MCF 10A (cell line): ENCODE measurements at regions of chr9 and their contacts with region 1.

Region 1: DNA sequence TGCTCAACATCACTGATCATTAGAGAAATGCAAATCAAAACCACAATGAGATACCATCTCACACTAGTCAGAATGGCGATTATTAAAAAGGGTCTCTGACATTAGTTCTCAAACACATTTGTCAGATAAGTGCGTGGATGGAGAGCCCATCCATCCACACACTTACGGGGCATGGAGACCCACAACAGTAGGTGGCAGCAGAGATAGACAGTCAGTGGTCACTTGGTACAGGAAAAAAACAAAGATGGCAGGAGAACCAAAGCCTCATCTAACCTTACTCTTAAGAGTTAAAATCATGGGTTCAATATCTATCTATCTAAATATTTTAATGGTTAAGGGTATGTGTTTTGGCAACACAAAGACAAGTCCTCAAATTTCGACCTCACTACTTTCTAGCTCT is 1378.7 kb upstream of the C9orf72 start:
- DNase-seq: peak; percentile 8
- H3K4me3 Mint-ChIP-seq: no peak overlapping the region
- H3K27ac Mint-ChIP-seq: no peak overlapping the region
- H3K4me1 Mint-ChIP-seq: no peaks in the 10 kb centered on the region
- H3K27me3 Mint-ChIP-seq: no peaks in the 10 kb centered on the region
- CTCF ChIP-seq: no peak

Region 2: GRCh38 chr9:28045051-28045450 is 906.9 kb before region 1 on chr9:
- CTCF ChIA-PET with region 1: no interaction called
- POLR2A ChIA-PET with region 1: no interaction called
- intact Hi-C with region 1: no loop called
- DNase-seq: no peak
- H3K4me3 Mint-ChIP-seq: no peak overlapping the region
- H3K27ac Mint-ChIP-seq: no peak overlapping the region
- H3K4me1 Mint-ChIP-seq: peaks cover 4% of the 10 kb centered on the region
- H3K27me3 Mint-ChIP-seq: peaks cover 49% of the 10 kb centered on the region
- CTCF ChIP-seq: no peak

Region 3: DNA sequence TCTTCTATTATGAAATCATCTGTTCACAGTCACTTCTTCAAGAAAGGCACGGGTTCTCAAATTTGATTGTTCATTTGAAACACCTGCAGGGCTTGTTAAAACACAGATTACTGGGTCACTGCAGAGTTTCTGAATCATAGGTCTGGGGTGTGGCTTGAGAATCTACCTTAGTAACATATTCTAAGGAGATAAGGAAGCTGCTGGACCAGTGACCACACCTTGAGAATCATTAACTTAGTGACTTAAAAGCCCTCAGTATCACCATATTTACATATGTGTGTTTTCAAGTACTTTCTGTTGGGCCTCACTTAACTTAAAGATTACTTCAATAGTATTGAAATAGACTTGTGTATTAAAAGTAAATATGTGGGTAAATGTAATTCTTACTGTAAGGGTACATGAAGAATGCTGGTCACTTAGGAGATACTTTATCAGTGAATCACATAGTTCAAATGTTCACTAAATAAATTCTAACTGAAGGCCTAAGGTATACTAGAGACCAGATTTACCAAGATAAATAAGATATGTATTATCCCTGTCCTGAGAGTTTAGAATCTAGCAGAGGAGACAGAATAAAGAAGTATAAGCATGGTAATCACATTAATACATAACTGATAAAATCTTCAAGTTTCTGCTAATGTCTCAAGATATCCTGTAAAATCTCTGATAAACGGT is 36.6 kb before region 1 on chr9:
- CTCF ChIA-PET with region 1: no interaction called
- POLR2A ChIA-PET with region 1: no interaction called
- intact Hi-C with region 1: loop called (anchors 1 kb)
- DNase-seq: peak; percentile 33
- H3K4me3 Mint-ChIP-seq: no peak overlapping the region
- H3K27ac Mint-ChIP-seq: no peak overlapping the region
- H3K4me1 Mint-ChIP-seq: no peaks in the 10 kb centered on the region
- H3K27me3 Mint-ChIP-seq: no peaks in the 10 kb centered on the region
- CTCF ChIP-seq: no peak